Activated CD4-positive, alpha-beta memory T cell treated with anti-CD3 and anti-CD28 coated beads for 36 hours (primary cell): ENCODE measurements at regions of chr14 and their contacts with region 1.

Region 1: GRCh38 chr14:50532502-50533240 is at the start of gene MAP4K5:
- DNase-seq: peak; percentile 91
- H3K4me3 Mint-ChIP-seq: peak within 1 kb of the TSS; percentile 85
- H3K27ac Mint-ChIP-seq: peak within 1 kb of the TSS; percentile 58
- H3K4me1 Mint-ChIP-seq: peaks cover 42% of the 10 kb centered on the region
- H3K27me3 Mint-ChIP-seq: no peaks in the 10 kb centered on the region
- total RNA-seq, gene MAP4K5: 14.6 to 15.6 TPM

Region 2: DNA sequence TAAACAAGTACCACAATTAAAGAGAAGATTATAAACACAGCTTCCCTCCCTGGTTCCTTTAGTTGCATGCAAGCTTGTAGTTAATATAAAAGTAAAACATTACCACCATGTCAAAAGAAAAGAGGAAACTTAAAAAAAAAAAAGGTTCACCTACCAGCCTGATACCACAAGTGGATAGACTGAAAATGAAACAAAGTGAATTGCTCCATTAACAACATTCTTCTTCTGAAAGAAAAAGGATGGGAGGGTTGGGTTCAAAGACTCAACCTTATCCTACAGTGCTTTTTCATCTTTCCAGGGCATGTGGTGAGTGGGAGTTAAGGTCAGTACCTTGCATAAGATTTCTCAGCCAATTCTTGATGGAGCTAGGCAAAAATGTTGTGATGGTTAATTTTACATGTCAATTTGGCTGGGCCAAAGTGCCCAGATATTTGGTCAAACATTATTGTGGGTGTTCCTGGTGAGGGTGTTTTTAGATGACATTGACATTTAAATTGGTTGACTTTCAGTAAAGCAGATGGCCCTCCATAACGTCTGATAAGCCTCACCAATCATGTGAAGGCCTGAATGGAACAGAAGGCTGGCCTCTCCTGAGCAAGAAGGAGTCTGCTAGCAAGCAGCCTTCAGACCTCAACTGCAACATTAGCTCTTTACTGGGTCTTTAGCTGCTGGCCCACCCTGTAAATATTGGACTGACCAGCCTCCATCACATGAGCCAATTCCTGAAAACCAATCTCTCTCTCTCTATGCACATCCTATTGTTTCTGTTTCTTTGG is 445.1 kb before region 1 on chr14:
- CTCF ChIA-PET with region 1: no interaction called
- POLR2A ChIA-PET with region 1: no interaction called
- intact Hi-C with region 1: no loop called
- DNase-seq: no peak
- H3K4me3 Mint-ChIP-seq: peak overlapping the region; percentile 27
- H3K27ac Mint-ChIP-seq: peak overlapping the region; percentile 52
- H3K4me1 Mint-ChIP-seq: peaks cover 81% of the 10 kb centered on the region
- H3K27me3 Mint-ChIP-seq: no peaks in the 10 kb centered on the region

Region 3: GRCh38 chr14:50116181-50116956 is 416.3 kb before region 1 on chr14 and contains the start of gene VCPKMT:
- CTCF ChIA-PET with region 1: no interaction called
- POLR2A ChIA-PET with region 1: no interaction called
- intact Hi-C with region 1: loop called (anchors 5 kb)
- DNase-seq: peak; percentile 96
- H3K4me3 Mint-ChIP-seq: peak within 1 kb of the TSS; percentile 98
- H3K27ac Mint-ChIP-seq: peak within 1 kb of the TSS; percentile 95
- H3K4me1 Mint-ChIP-seq: peaks cover 37% of the 10 kb centered on the region
- H3K27me3 Mint-ChIP-seq: no peaks in the 10 kb centered on the region
- total RNA-seq, gene VCPKMT: 7.7 to 10.1 TPM

Region 4: DNA sequence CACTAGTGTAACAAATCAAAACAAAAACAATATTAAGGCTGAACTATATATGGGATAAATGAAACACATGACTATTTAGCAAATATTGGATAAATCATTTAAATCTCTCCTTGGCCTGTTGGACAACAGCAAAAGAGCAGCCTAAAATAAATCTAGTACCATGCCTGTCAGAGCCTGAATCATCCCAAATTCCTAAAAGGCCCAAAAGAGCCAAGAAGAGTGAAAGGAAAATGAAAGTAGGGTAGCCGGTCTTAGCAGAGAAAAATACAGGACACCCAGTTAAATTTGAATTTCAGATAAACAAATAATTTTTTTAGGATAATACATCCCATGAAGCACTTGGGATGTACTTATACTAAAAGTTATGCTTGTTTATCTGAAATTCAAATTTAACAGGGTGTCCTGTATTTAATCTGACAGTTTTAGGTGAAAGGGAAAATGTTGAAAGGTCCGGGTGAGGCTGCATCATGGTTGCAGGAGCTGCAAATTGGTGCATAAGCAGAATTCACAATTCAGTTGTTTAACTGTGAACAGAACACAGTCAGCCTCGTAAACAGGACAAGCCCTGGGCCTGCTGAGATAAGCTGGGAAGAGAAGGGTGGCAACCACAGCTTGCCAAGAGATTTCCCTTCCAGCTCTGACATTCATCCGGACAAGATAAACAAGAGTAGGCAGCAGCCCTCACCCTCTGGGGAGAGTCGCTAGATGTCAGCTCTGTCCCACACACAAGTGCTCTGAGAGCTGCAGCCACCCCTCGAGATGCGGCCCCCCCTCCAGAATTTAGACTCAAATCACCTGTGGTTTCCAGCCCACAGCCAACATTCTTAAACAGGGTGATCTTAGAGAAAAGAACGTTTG is 190.2 kb before region 1 on chr14:
- CTCF ChIA-PET with region 1: no interaction called
- POLR2A ChIA-PET with region 1: no interaction called
- intact Hi-C with region 1: loop called (anchors 1 kb)
- DNase-seq: peak; percentile 56
- H3K4me3 Mint-ChIP-seq: no peak overlapping the region
- H3K27ac Mint-ChIP-seq: no peak overlapping the region
- H3K4me1 Mint-ChIP-seq: peaks cover 22% of the 10 kb centered on the region
- H3K27me3 Mint-ChIP-seq: peaks cover 4% of the 10 kb centered on the region

Region 5: GRCh38 chr14:50396631-50397390 is 135.9 kb before region 1 on chr14 and contains the start of gene CDKL1:
- CTCF ChIA-PET with region 1: no interaction called
- POLR2A ChIA-PET with region 1: no interaction called
- intact Hi-C with region 1: loop called (anchors 5 kb)
- DNase-seq: peak; percentile 57
- H3K4me3 Mint-ChIP-seq: peak within 1 kb of the TSS; percentile 82
- H3K27ac Mint-ChIP-seq: no peak within 1 kb of the TSS
- H3K4me1 Mint-ChIP-seq: peaks cover 11% of the 10 kb centered on the region
- H3K27me3 Mint-ChIP-seq: peaks cover 4% of the 10 kb centered on the region
- total RNA-seq, gene CDKL1: 2.4 to 3.4 TPM